ENCODE measurements at regions of chr22 and their contacts with region 1.

Region 1: DNA sequence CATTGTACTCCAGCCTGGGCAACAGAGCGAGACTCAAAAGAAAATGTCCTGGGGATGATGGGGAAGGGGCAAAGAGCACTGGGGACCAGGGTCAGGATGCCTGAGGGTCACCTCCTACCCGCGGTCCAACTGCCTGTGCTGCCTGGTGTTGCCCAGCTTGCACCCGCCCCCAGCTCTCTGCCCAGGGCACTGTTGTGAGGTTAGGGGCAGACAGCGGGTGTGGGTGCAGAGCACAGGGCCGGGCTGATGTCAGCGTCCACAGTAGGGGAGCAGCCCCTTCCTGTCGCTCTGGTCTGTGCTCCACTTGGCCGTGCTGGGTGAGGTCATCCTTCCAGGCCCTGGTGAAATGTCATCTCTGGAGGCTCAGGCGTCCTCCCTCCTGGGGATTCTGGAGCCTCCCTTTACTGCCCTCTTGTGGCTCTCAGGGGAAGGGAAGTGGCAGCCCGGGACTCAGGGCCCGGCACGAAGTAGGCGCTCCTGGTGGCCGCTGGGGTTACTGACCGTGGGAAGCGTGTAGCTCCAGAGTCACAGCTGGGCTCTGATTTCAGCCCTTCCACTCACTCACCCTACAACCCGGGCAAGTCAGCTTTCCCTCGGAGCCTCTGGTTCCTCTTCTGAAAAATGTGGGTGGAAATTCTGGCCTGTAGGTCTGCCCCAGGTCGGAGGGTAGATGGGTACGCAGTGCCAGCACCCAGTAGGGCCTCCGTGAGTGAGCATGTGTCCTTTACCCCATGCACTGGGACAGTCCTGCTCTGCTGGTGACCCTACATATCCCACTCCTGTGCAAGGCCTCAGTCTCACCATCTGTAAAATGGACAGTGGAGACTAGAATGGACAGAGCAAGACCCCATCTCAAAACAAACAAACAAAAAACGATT is 17.3 kb upstream of the PRR5 start:
- DNase-seq: peak; percentile 96
- H3K4me3 Mint-ChIP-seq: peak overlapping the region; percentile 43
- H3K27ac Mint-ChIP-seq: peak overlapping the region; percentile 93
- H3K4me1 Mint-ChIP-seq: peaks cover 52% of the 10 kb centered on the region
- H3K27me3 Mint-ChIP-seq: no peaks in the 10 kb centered on the region

Region 2: DNA sequence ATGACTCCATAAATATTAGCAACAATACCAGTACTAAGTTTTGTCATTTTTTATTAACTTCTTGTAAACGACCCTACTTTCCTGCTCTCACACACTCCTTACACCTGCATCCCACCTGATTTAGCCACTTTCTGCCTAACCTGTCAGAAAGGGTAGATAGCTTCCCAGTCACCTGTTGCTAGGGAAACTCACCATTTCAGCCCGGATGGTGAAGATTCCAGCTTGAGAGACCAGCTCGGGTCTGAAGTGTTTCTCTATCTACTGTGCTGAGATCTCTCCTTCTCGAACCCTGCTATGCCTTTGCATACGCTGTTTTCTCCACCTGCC is 504.1 kb before region 1 on chr22 and contains the start of gene PARVG:
- intact Hi-C with region 1: loop called (anchors 10 kb)
- DNase-seq: peak; percentile 86
- H3K4me3 Mint-ChIP-seq: peak within 1 kb of the TSS; percentile 93
- H3K27ac Mint-ChIP-seq: peak within 1 kb of the TSS; percentile 96
- H3K4me1 Mint-ChIP-seq: peaks cover 22% of the 10 kb centered on the region
- H3K27me3 Mint-ChIP-seq: peaks cover 7% of the 10 kb centered on the region
- total RNA-seq, gene PARVG: 48.9 and 52.2 TPM in 2 replicates

Region 3: GRCh38 chr22:44668190-44668885 is 16.4 kb before region 1 on chr22:
- intact Hi-C with region 1: loop called (anchors 1 kb)
- DNase-seq: peak; percentile 89
- H3K4me3 Mint-ChIP-seq: peak overlapping the region; percentile 83
- H3K27ac Mint-ChIP-seq: peak overlapping the region; percentile 81
- H3K4me1 Mint-ChIP-seq: peaks cover 44% of the 10 kb centered on the region
- H3K27me3 Mint-ChIP-seq: peaks cover 11% of the 10 kb centered on the region

Region 4: DNA sequence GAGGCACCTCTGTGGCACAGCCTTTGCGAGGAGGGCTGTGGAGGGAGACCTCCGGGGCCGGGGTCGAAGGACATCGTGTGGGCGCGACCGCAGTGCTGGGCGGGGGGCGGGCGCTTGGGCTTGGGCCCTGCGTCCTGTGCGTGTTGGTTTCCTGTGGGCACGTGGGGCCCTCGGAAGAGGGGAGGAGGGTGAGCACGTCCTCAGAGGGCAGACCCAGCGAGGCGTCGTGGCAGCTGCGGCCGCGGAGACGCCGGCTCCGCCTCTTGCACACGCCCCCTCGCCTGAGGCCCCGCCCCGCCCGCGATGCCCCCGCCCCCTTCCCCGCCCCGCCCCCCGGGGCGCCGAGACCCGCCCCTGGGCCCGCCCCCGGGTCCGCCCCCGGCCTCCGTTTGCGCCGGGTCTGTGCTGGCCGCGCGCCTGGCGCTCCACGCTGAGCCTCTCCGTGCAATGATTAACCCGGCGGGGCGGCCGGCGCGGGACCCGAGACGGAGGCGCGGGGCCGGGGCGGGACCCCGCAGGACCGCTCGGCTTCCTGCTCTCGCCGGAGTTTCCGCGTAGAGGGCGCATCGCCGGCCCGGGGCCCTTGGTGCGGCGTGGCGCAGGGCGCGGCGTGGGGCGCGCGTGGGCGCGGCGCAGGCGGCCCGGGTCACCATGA is 17.2 kb after region 1 on chr22 and contains the start of gene PRR5:
- intact Hi-C with region 1: loop called (anchors 1 kb)
- DNase-seq: peak; percentile 94
- H3K4me3 Mint-ChIP-seq: peak within 1 kb of the TSS; percentile 75
- H3K27ac Mint-ChIP-seq: peak within 1 kb of the TSS; percentile 68
- H3K4me1 Mint-ChIP-seq: peaks cover 4% of the 10 kb centered on the region
- H3K27me3 Mint-ChIP-seq: peaks cover 3% of the 10 kb centered on the region
- total RNA-seq, gene PRR5: 22.7 and 23.6 TPM in 2 replicates

Region 5: DNA sequence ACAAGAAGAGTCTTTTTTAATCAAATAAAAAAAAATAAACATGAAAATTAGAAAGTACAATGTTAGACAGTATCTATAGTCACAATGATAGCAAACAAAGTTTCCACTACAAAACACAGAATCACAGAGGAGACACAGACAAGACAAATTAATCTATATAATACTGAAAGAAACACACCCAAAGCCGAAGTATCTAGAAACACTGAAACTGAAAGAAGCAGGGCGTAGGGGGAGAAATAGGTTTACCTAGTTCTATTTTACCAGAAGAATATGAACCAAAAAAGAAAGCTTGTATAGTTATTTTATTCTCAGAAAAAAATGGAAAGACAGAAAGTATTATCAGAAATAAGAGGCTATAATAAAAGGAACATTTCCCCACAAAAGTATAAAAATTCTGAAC is 451.8 kb after region 1 on chr22:
- intact Hi-C with region 1: no loop called
- DNase-seq: no peak
- H3K4me3 Mint-ChIP-seq: no peak overlapping the region
- H3K27ac Mint-ChIP-seq: no peak overlapping the region
- H3K4me1 Mint-ChIP-seq: peaks cover 7% of the 10 kb centered on the region
- H3K27me3 Mint-ChIP-seq: no peaks in the 10 kb centered on the region

Measured in activated CD4-positive, alpha-beta T cell treated with anti-CD3 and anti-CD28 coated beads, Interleukin-2, amount 10 ng/mL, durations not matched to agents 24 days and 14 days (primary cell).